Adrenal gland (tissue), 19 donors: ENCODE measurements at regions of chr1 and their contacts with region 1.

Region 1: GRCh38 chr1:64136752-64137411 is 66.5 kb upstream of the UBE2U start:
- DNase-seq: peak; percentile 66 to 94 (median 81)
- H3K4me3 ChIP-seq: no peak overlapping the region
- H3K27ac ChIP-seq: no peak overlapping the region
- H3K4me1 ChIP-seq: no peaks in the 10 kb centered on the region
- H3K27me3 ChIP-seq: no peaks in the 10 kb centered on the region
- CTCF ChIP-seq: peak; percentile 83 to 92 (median 89)
- POLR2A ChIP-seq: no peak

Region 2: DNA sequence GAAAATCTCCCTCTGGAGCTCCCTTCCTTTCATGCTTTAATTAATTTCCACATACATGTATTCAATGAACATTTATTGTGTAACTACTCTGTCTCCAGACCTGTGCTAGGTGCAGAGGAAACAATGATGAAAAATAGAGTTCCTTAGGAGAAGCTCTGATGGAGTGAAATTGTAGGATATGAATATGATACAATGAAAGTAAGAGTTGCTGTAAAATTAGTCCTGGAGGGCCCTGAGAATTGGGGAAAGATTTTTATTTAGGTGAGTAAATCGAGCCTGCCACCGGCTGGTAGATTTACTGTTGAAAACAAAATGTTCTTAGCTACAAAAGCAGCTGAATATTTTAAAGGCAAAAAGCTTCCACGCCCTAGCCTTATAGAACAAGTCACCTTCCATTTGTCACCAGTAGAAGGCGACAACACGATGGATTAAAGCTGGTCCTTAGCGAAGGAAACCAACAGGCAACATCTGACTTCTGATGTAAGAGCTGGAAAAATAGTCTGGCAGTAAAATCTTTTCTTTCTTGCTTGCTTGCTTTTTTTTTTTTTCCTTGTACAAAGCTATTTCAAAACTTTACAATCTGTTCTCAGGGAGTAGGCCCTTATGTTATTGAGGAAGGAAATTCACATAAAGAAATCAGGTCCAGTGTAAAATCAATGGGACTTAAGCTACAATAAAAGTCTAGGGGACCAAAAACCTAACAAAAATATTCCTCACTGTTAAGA is 445.0 kb before region 1 on chr1:
- intact Hi-C with region 1: loop called (anchors 5 to 10 kb)
- DNase-seq: peak; percentile 57 to 79 (median 64)
- H3K4me3 ChIP-seq: no peak overlapping the region
- H3K27ac ChIP-seq: no peak overlapping the region
- H3K4me1 ChIP-seq: peaks cover 0 to 4% of the 10 kb centered on the region in 2 donors
- H3K27me3 ChIP-seq: no peaks in the 10 kb centered on the region
- CTCF ChIP-seq: peak; percentile 61 to 84 (median 80)
- POLR2A ChIP-seq: no peak

Region 3: GRCh38 chr1:63774617-63775417 is 362.1 kb before region 1 on chr1:
- intact Hi-C with region 1: loop called in 1 of 2 experiments (anchors 5 kb)
- DNase-seq: peak in 5 of 7 donors; percentile 17 to 34 (median 28)
- H3K4me3 ChIP-seq: peak overlapping the region in 3 of 4 donors; percentile 1 to 75 (median 51)
- H3K27ac ChIP-seq: peak overlapping the region in 2 of 5 donors; percentile 63 to 82
- H3K4me1 ChIP-seq: peaks cover 0 to 12% of the 10 kb centered on the region in 2 donors
- H3K27me3 ChIP-seq: no peaks in the 10 kb centered on the region
- CTCF ChIP-seq: no peak
- POLR2A ChIP-seq: no peak

Region 4: DNA sequence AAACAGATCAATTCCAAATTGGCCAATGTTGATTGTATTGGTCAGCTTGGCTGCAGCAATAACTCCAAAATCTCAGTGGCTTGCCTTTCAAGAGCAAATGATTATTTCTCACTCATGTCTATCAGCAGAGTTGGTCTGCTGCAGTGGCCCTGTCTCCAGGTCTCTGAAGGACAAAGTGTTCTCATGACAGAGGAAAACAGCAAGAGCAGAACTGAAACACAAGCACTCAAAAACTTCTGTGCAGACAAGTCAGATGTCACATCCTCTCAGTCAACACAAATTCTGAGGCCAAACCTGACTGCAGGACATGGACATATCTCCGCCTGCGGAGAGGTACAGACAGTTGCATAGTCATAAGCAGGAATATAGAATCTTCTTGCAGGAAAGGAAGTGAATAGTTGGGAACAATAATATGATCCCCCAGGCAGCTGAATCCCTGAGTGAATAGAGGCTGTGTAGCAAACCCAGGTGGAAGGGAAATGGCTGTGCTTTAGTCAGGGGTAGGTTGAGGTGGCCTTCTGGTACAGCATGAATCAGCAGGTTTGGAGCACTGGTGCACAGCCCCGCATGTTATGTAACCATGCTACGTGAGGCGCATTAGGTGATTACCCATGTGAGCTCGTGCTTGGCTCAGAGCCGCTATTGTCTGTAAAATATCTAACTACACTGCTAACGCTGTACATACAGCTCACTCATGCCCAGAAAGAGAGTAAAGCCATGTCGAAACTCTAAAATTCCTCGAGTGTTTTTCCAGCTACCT is 49.4 kb after region 1 on chr1:
- intact Hi-C with region 1: no loop called
- DNase-seq: no peak
- H3K4me3 ChIP-seq: no peak overlapping the region
- H3K27ac ChIP-seq: no peak overlapping the region
- H3K4me1 ChIP-seq: peaks cover 0 to 2% of the 10 kb centered on the region in 2 donors
- H3K27me3 ChIP-seq: no peaks in the 10 kb centered on the region
- CTCF ChIP-seq: no peak
- POLR2A ChIP-seq: no peak